ENCODE measurements at regions of chr11 and their contacts with region 1.

Region 1: GRCh38 chr11:57523419-57523818 is 7.1 kb downstream of the TIMM10 start:
- H3K4me3 Mint-ChIP-seq: no peak overlapping the region
- H3K27ac Mint-ChIP-seq: no peak overlapping the region
- H3K4me1 Mint-ChIP-seq: peaks cover 6% of the 10 kb centered on the region
- H3K27me3 Mint-ChIP-seq: no peaks in the 10 kb centered on the region

Region 2: GRCh38 chr11:57493507-57494503 is 29.6 kb before region 1 on chr11:
- intact Hi-C with region 1: loop called (anchors 1 kb)
- H3K4me3 Mint-ChIP-seq: no peak overlapping the region
- H3K27ac Mint-ChIP-seq: no peak overlapping the region
- H3K4me1 Mint-ChIP-seq: no peaks in the 10 kb centered on the region
- H3K27me3 Mint-ChIP-seq: no peaks in the 10 kb centered on the region